ENCODE measurements at regions of chr2 and their contacts with region 1.

Region 1: DNA sequence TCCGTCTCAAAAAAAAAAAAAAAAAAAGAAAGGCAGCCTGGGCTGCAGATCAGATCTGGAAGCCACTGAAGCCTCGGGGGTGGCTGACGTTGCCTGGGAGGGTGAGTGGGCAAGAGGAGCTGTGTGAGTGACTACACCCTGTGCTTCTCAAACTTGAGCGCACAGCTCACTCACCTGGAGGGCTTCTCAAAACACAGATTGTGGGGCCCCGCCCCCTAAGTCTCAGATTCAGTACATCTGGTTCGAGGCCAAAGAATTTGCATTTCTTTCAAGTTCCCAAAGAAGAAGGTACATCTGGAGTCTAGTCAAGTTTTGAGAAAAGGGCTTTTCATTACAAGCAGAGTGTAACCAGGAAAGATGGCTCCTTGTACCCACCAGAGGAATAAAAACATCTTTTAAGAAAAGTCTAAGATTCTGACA is 97.7 kb upstream of the CAB39 start:
- DNase-seq: peak; percentile 85
- ATAC-seq: peak; percentile 88
- H3K4me3 ChIP-seq: peak overlapping the region; percentile 53; the same call in 1 of the 2 replicates
- H3K27ac ChIP-seq: peak overlapping the region; percentile 60
- H3K4me1 ChIP-seq: peaks cover 22% of the 10 kb centered on the region
- H3K27me3 ChIP-seq: no peaks in the 10 kb centered on the region
- CTCF ChIP-seq: peak in 1 of 3 experiments; percentile 13; a peak in 1 of 6 replicates
- EP300 ChIP-seq: no peak
- POLR2A ChIP-seq: peak; percentile 45; the same call in 1 of the 2 replicates
- RAD21 ChIP-seq: peak; percentile 44; the same call in 1 of the 2 replicates

Region 2: DNA sequence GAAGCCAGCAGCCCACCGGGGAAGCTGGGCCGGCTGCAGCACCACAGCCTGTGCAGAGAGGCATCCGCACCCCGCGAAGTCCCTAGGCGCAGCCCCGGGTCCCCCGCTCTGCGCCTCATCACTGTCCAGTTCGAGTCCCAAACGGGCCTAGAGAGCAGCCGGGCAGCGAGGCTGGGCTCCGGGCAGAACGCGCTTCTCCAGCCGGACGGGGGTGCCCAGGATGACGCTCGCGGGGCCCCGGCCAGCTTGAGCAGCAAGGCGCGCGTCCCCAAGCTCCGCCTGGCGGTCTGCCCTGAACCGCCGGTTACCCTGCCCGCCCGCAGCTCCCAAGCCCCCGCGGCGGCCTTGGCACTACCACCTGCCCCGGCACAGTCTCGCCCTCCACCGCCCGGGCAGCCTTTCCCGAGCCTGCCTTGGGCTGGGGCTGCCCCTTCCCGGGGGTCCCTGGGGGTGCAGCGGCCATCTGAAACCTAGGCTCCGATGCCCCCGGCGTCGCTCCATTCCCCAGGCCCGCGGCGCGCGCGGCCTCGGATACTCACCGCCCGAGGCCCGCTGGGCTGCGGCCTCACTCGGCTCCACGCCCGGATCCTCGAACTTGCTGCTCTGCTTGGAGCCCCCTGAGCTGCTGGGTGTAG is 546.8 kb before region 1 on chr2:
- CTCF ChIA-PET with region 1: interaction called, 4 read pairs
- POLR2A ChIA-PET with region 1: interaction called, 4 read pairs
- RAD21 ChIA-PET with region 1: interaction called, 7 read pairs
- SMC1A ChIA-PET with region 1: interaction called, 7 read pairs
- in situ Hi-C with region 1: no loop called
- intact Hi-C with region 1: loop called (anchors 1 kb)
- DNase-seq: no peak
- ATAC-seq: peak; percentile 66
- H3K4me3 ChIP-seq: peak overlapping the region; percentile 82
- H3K27ac ChIP-seq: peak overlapping the region; percentile 56; the same call in 1 of the 2 replicates
- H3K4me1 ChIP-seq: peaks cover 5% of the 10 kb centered on the region
- H3K27me3 ChIP-seq: peaks cover 0 to 2% of the 10 kb centered on the region in 2 experiments; a peak in 1 of 4 replicates
- CTCF ChIP-seq: peak; percentile 2 to 15 (median 12); a peak in 1 of 6 replicates
- EP300 ChIP-seq: no peak
- POLR2A ChIP-seq: peak; percentile 48
- RAD21 ChIP-seq: no peak

Region 3: DNA sequence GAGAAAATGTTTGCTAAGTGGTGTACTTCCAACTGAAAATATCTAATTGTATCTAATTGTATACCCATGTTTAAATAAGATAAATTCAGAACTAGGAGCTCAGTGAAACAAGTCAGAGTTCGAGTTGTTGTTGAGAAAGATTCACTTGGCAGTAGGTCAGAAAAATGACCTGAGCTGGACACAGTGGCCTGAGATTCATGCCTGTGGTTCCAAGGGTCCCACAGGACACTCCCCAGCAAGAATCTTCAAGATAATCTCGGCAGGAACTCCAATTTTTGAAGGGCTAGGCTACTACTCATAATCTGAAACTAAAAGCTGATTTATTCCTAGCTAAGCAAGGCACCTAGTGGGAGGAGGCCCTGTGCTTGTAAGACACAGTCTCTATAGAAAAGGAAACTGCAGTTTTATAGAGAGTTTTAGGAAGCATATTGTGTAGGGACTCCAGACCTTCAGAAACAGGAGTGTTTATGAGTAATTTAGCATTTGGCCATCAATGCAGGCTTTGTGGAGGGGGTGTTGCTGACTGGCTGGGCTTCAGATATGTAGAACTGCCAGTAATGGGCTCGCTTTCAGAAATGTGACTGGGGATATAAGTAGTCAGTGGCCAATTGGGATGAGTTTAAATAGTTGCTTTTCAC is 346.2 kb before region 1 on chr2:
- CTCF ChIA-PET with region 1: no interaction called
- POLR2A ChIA-PET with region 1: no interaction called
- RAD21 ChIA-PET with region 1: no interaction called
- SMC1A ChIA-PET with region 1: no interaction called
- in situ Hi-C with region 1: no loop called
- intact Hi-C with region 1: loop called (anchors 5 kb)
- DNase-seq: peak; percentile 36
- ATAC-seq: peak; percentile 59
- H3K4me3 ChIP-seq: no peak overlapping the region
- H3K27ac ChIP-seq: peak overlapping the region; percentile 76
- H3K4me1 ChIP-seq: peaks cover 28% of the 10 kb centered on the region
- H3K27me3 ChIP-seq: no peaks in the 10 kb centered on the region
- CTCF ChIP-seq: no peak
- EP300 ChIP-seq: no peak
- POLR2A ChIP-seq: no peak
- RAD21 ChIP-seq: no peak

Region 4: GRCh38 chr2:230472621-230473018 is 142.3 kb before region 1 on chr2:
- CTCF ChIA-PET with region 1: interaction called, 4 read pairs
- POLR2A ChIA-PET with region 1: no interaction called
- RAD21 ChIA-PET with region 1: interaction called, 8 read pairs
- SMC1A ChIA-PET with region 1: interaction called, 9 read pairs
- in situ Hi-C with region 1: no loop called
- intact Hi-C with region 1: loop called (anchors 5 kb)
- DNase-seq: peak; percentile 34
- ATAC-seq: peak; percentile 71
- H3K4me3 ChIP-seq: no peak overlapping the region
- H3K27ac ChIP-seq: peak overlapping the region; percentile 21
- H3K4me1 ChIP-seq: peaks cover 32% of the 10 kb centered on the region
- H3K27me3 ChIP-seq: no peaks in the 10 kb centered on the region
- CTCF ChIP-seq: no peak
- EP300 ChIP-seq: no peak
- POLR2A ChIP-seq: no peak
- RAD21 ChIP-seq: no peak

Region 5: DNA sequence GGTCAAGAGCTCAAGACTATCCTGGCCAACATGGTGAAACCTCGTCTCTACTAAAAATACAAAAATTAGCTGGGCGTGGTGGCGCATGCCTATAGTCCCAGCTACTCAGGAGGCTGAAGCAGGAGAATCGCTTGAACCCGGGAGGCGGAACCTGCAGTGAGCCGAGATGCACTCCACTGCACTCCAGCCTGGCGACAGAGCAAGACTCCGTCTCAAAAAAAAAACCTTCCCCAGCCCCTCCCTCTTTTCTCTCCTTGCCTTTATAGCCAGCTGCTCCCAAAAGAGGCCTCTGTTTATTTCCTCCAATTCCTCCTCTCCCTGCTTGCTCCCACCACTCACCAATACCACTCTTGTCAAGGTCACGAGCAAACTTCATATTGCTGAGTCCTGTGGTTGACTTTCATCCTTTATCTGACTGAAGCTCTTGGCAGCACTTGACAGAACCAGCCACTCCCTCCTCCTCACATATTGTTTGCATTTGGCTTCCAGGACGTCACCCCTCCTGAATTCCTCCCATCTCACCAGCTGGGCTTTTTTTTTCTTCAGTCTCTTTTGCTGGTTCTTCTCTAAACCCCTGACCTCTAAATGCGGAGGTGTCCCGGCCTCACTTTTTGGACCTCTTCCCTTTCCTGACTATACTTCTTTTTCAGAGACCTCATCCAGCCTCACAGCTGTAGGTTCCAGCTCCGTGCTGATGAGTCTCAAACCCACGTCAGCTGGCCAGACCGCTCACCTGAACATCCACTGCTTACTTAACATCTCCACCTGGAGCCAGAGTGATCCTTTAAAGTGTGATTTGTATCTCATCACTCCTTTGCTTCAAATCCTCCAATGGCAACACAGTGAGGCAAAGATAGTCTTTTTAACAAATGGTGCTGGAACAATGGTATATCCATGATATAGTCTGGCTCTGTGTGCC is 13.1 kb after region 1 on chr2:
- CTCF ChIA-PET with region 1: interaction called, 6 read pairs
- POLR2A ChIA-PET with region 1: interaction called, 7 read pairs
- RAD21 ChIA-PET with region 1: interaction called, 11 read pairs
- SMC1A ChIA-PET with region 1: interaction called, 26 read pairs
- in situ Hi-C with region 1: no loop called
- intact Hi-C with region 1: no loop called
- DNase-seq: no peak
- ATAC-seq: no peak
- H3K4me3 ChIP-seq: no peak overlapping the region
- H3K27ac ChIP-seq: no peak overlapping the region
- H3K4me1 ChIP-seq: no peaks in the 10 kb centered on the region
- H3K27me3 ChIP-seq: no peaks in the 10 kb centered on the region
- CTCF ChIP-seq: no peak
- EP300 ChIP-seq: no peak
- POLR2A ChIP-seq: no peak
- RAD21 ChIP-seq: no peak

Region 6: GRCh38 chr2:230658877-230659652 is 44.1 kb after region 1 on chr2:
- CTCF ChIA-PET with region 1: interaction called, 4 read pairs
- POLR2A ChIA-PET with region 1: interaction called, 13 read pairs
- RAD21 ChIA-PET with region 1: interaction called, 81 read pairs
- SMC1A ChIA-PET with region 1: interaction called, 72 read pairs
- in situ Hi-C with region 1: no loop called
- intact Hi-C with region 1: loop called (anchors 1 kb)
- DNase-seq: peak; percentile 91
- ATAC-seq: peak; percentile 61
- H3K4me3 ChIP-seq: peak overlapping the region; percentile 62
- H3K27ac ChIP-seq: peak overlapping the region; percentile 91
- H3K4me1 ChIP-seq: peaks cover 67% of the 10 kb centered on the region
- H3K27me3 ChIP-seq: no peaks in the 10 kb centered on the region
- CTCF ChIP-seq: no peak
- EP300 ChIP-seq: peak; percentile 62 to 76
- POLR2A ChIP-seq: no peak; the same call in 1 of the 2 replicates
- RAD21 ChIP-seq: peak; percentile 31; the same call in 1 of the 2 replicates

Region 7: GRCh38 chr2:230793572-230794359 is 178.8 kb after region 1 on chr2:
- CTCF ChIA-PET with region 1: interaction called, 56 read pairs
- POLR2A ChIA-PET with region 1: interaction called, 3 read pairs
- RAD21 ChIA-PET with region 1: interaction called, 49 read pairs
- SMC1A ChIA-PET with region 1: interaction called, 40 read pairs
- in situ Hi-C with region 1: no loop called
- intact Hi-C with region 1: loop called (anchors 2 kb)
- DNase-seq: no peak
- ATAC-seq: no peak
- H3K4me3 ChIP-seq: no peak overlapping the region
- H3K27ac ChIP-seq: peak overlapping the region; percentile 62
- H3K4me1 ChIP-seq: peaks cover 17% of the 10 kb centered on the region
- H3K27me3 ChIP-seq: no peaks in the 10 kb centered on the region
- CTCF ChIP-seq: no peak
- EP300 ChIP-seq: no peak
- POLR2A ChIP-seq: peak; percentile 42; the same call in 1 of the 2 replicates
- RAD21 ChIP-seq: no peak